ENCODE measurements at regions of chr22 and their contacts with region 1.

Region 1: GRCh38 chr22:43993027-43993760 is 30.9 kb upstream of the PARVB start:
- DNase-seq: peak; percentile 55
- H3K4me3 Mint-ChIP-seq: no peak overlapping the region
- H3K27ac Mint-ChIP-seq: no peak overlapping the region
- H3K4me1 Mint-ChIP-seq: no peaks in the 10 kb centered on the region
- H3K27me3 Mint-ChIP-seq: no peaks in the 10 kb centered on the region
- CTCF ChIP-seq: peak; percentile 91

Region 2: GRCh38 chr22:43435851-43436811 is 557.1 kb before region 1 on chr22:
- CTCF ChIA-PET with region 1: no interaction called
- POLR2A ChIA-PET with region 1: no interaction called
- intact Hi-C with region 1: no loop called
- DNase-seq: peak; percentile 4
- H3K4me3 Mint-ChIP-seq: no peak overlapping the region
- H3K27ac Mint-ChIP-seq: no peak overlapping the region
- H3K4me1 Mint-ChIP-seq: no peaks in the 10 kb centered on the region
- H3K27me3 Mint-ChIP-seq: peaks cover 84% of the 10 kb centered on the region
- CTCF ChIP-seq: no peak

Region 3: DNA sequence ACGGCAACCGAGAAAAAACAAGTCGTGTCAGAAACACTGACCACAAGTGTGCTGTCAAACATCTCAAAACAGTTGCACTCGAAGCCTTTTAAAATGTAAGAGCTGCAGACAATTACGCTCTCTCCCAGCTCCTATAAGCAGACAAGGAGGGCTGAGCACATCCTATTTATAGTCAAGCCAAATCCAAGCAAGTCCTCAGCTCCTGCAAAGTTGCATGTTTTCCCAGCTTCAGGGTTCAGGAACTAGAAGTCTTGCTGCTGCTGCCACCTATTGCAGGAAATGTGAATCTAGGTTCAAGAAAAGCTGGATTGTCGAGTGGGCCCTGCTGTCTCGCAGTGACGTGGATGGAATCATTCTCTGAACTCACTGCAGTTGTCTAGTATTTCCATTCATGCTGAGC is 196.6 kb before region 1 on chr22:
- CTCF ChIA-PET with region 1: no interaction called
- POLR2A ChIA-PET with region 1: no interaction called
- intact Hi-C with region 1: no loop called
- DNase-seq: peak; percentile 38
- H3K4me3 Mint-ChIP-seq: no peak overlapping the region
- H3K27ac Mint-ChIP-seq: no peak overlapping the region
- H3K4me1 Mint-ChIP-seq: no peaks in the 10 kb centered on the region
- H3K27me3 Mint-ChIP-seq: peaks cover 33% of the 10 kb centered on the region
- CTCF ChIP-seq: peak; percentile 41

Region 4: GRCh38 chr22:43976861-43977795 is 16.1 kb before region 1 on chr22:
- CTCF ChIA-PET with region 1: interaction called, 35 read pairs
- POLR2A ChIA-PET with region 1: no interaction called
- intact Hi-C with region 1: no loop called
- DNase-seq: no peak
- H3K4me3 Mint-ChIP-seq: no peak overlapping the region
- H3K27ac Mint-ChIP-seq: no peak overlapping the region
- H3K4me1 Mint-ChIP-seq: no peaks in the 10 kb centered on the region
- H3K27me3 Mint-ChIP-seq: no peaks in the 10 kb centered on the region
- CTCF ChIP-seq: no peak

Region 5: DNA sequence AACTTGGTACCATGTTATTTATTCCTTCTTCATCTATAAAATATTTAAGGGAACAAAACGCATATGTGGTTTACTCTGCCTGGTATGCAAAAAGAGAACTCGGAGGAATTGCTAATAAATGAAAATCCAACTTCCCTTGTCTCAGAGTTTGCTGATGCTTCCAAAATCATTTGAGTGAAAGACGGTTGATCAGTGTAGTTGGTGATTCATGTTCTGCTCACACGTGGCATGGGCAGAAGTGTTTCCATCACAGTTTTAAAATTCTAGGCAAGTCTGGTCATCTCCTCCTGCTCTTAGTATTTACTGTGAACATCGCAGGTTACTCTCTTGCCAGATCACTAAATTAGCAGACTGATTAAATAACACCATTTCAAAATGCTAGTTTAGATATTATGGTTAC is 19.0 kb after region 1 on chr22:
- CTCF ChIA-PET with region 1: interaction called, 26 read pairs
- POLR2A ChIA-PET with region 1: no interaction called
- intact Hi-C with region 1: no loop called
- DNase-seq: no peak
- H3K4me3 Mint-ChIP-seq: no peak overlapping the region
- H3K27ac Mint-ChIP-seq: no peak overlapping the region
- H3K4me1 Mint-ChIP-seq: no peaks in the 10 kb centered on the region
- H3K27me3 Mint-ChIP-seq: no peaks in the 10 kb centered on the region
- CTCF ChIP-seq: no peak

Region 6: GRCh38 chr22:44037519-44038370 is 44.6 kb after region 1 on chr22:
- CTCF ChIA-PET with region 1: interaction called, 13 read pairs
- POLR2A ChIA-PET with region 1: interaction called, 4 read pairs
- intact Hi-C with region 1: no loop called
- DNase-seq: peak; percentile 91
- H3K4me3 Mint-ChIP-seq: peak overlapping the region; percentile 48
- H3K27ac Mint-ChIP-seq: peak overlapping the region; percentile 59
- H3K4me1 Mint-ChIP-seq: peaks cover 15% of the 10 kb centered on the region
- H3K27me3 Mint-ChIP-seq: no peaks in the 10 kb centered on the region
- CTCF ChIP-seq: no peak

Region 7: DNA sequence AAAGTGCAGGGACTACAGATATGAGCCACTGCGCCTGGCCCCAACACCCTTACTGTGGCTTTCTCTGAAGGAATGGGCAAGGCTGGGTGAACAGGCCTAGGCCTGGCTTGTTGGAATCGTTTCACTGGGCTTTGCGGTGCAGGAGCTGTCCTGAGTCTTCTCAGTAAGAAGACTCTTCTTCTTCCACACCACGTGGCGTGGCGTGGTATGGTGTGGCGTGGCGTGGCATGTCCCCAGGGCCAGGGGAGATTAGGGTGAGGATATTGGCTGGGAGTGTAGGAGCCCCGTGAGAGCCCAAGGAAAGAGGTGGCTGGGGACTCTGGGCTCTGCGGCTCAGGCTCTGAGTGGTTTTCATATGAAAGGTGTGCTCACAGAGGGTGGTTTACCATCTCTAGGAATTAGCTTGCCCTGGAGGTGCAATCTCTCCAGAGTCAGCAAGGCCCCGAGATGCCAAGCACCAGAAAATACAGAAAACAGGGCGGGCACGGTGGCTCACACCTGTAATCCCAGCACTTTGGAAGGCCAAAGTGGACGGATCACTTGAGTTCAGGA is 101.6 kb after region 1 on chr22:
- CTCF ChIA-PET with region 1: interaction called, 10 read pairs
- POLR2A ChIA-PET with region 1: no interaction called
- intact Hi-C with region 1: no loop called
- DNase-seq: no peak
- H3K4me3 Mint-ChIP-seq: no peak overlapping the region
- H3K27ac Mint-ChIP-seq: no peak overlapping the region
- H3K4me1 Mint-ChIP-seq: no peaks in the 10 kb centered on the region
- H3K27me3 Mint-ChIP-seq: no peaks in the 10 kb centered on the region
- CTCF ChIP-seq: no peak

Measured in MCF 10A (cell line).